ENCODE measurements at regions of chr15 and their contacts with region 1.

Region 1: GRCh38 chr15:68091743-68092142 is 37.6 kb downstream of the PIAS1 start:
- DNase-seq: no peak
- ATAC-seq: no peak
- H3K4me3 ChIP-seq: no peak overlapping the region
- H3K27ac ChIP-seq: no peak overlapping the region
- H3K4me1 ChIP-seq: no peaks in the 10 kb centered on the region
- H3K27me3 ChIP-seq: no peaks in the 10 kb centered on the region
- CTCF ChIP-seq: no peak
- EP300 ChIP-seq: no peak
- POLR2A ChIP-seq: no peak
- RAD21 ChIP-seq: no peak

Region 2: DNA sequence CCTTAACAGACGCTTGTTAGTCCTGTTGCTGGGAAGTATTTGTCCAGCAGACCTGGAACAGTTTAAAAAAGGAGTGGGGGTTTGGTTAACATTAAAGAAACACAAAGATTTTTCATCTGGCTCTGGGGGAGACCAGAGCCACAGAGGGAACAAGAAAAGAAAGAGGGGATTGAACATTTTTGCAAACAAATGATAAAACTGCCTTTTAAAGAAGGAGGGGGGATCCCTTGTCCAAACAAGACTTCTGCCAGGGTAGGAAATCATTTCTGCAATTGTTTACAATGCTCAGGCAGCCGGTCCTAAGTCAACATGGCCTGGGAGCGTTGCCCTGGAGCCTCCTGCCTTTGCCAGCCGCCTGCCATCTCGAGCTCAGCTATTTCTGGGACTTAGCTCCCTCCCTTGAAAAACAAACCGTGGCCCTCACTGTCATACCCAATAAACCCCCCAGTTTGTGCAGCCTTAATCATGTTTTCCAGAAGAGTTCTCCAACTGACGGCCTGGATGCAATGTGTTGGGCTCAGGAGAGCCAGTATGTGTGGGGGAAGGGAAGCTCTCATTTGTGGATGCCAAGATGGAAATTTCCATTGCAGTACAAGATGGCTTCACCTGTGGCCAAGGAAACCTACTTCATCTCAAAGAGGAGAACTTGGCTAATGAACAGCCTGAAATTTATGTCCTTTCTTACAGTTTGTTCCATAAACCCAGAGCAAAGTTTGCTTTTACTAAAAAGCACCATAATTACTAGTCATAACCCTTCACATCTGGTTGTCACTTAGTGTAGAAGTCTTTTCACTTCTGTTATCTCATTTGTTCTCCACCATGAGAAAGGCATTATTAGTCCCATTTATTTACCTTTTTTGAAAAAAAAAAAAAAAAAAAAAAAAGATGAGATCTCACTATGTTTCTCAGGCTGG is 176.0 kb before region 1 on chr15:
- CTCF ChIA-PET with region 1: no interaction called
- POLR2A ChIA-PET with region 1: no interaction called
- RAD21 ChIA-PET with region 1: no interaction called
- SMC1A ChIA-PET with region 1: no interaction called
- in situ Hi-C with region 1: no loop called
- intact Hi-C with region 1: no loop called
- DNase-seq: no peak
- ATAC-seq: no peak
- H3K4me3 ChIP-seq: no peak overlapping the region
- H3K27ac ChIP-seq: no peak overlapping the region
- H3K4me1 ChIP-seq: peaks cover 6% of the 10 kb centered on the region
- H3K27me3 ChIP-seq: no peaks in the 10 kb centered on the region
- CTCF ChIP-seq: no peak
- EP300 ChIP-seq: no peak
- POLR2A ChIP-seq: no peak
- RAD21 ChIP-seq: no peak

Region 3: DNA sequence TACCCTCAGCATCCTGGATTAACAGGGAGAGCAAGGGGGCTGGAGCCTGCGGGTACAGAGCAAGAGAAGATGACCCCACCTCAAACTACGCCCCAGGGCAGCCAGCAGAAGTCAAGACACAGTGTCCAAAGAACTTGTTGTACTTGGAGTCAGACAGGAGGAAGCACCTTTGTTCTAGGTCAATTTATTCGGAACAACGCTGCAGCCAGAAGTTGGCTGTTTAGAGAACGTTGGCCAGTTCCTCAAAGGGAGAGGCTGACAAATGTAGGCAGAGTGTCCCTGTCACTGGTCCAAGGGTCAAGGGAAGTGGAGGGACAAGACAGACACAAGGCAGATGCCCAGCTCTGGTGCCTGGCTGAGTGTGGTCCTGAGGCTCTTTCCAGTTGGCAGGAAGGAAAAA is 69.7 kb before region 1 on chr15:
- CTCF ChIA-PET with region 1: no interaction called
- POLR2A ChIA-PET with region 1: no interaction called
- RAD21 ChIA-PET with region 1: no interaction called
- SMC1A ChIA-PET with region 1: no interaction called
- in situ Hi-C with region 1: no loop called
- intact Hi-C with region 1: no loop called
- DNase-seq: no peak
- ATAC-seq: no peak
- H3K4me3 ChIP-seq: no peak overlapping the region
- H3K27ac ChIP-seq: no peak overlapping the region
- H3K4me1 ChIP-seq: peaks cover 7% of the 10 kb centered on the region
- H3K27me3 ChIP-seq: no peaks in the 10 kb centered on the region
- CTCF ChIP-seq: no peak
- EP300 ChIP-seq: no peak
- POLR2A ChIP-seq: no peak
- RAD21 ChIP-seq: no peak

Region 4: DNA sequence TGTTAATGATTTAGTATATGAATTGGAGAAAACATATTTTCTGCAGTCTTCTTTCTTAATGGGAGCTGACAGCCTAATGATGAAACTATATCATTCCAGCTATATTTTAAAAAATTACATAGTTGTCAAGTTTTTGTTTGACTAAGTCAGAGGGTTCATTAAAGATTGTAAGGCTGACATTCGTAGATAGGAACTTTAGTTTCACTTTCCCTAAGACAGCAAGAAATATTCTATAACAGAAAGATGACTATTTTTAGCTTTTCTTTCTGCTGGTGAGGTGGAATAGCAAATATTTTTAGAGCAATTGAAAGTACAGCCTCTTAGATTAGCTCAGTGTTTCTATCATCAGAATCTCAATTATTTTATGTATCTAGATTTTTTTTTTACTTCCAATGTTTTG is 22.6 kb after region 1 on chr15:
- CTCF ChIA-PET with region 1: interaction called, 4 read pairs
- POLR2A ChIA-PET with region 1: interaction called, 5 read pairs
- RAD21 ChIA-PET with region 1: no interaction called
- SMC1A ChIA-PET with region 1: interaction called, 12 read pairs
- in situ Hi-C with region 1: no loop called
- intact Hi-C with region 1: no loop called
- DNase-seq: no peak
- ATAC-seq: peak; percentile 70
- H3K4me3 ChIP-seq: peak overlapping the region; percentile 47; the same call in 1 of the 2 replicates
- H3K27ac ChIP-seq: peak overlapping the region; percentile 24; the same call in 1 of the 2 replicates
- H3K4me1 ChIP-seq: peaks cover 17% of the 10 kb centered on the region
- H3K27me3 ChIP-seq: no peaks in the 10 kb centered on the region
- CTCF ChIP-seq: no peak
- EP300 ChIP-seq: no peak
- POLR2A ChIP-seq: no peak
- RAD21 ChIP-seq: no peak